ENCODE measurements at regions of chr11 and their contacts with region 1.

Region 1: GRCh38 chr11:45110562-45110961 is 35.9 kb upstream of the PRDM11 start:
- DNase-seq: peak; percentile 75
- H3K4me3 ChIP-seq: no peak overlapping the region
- H3K27ac ChIP-seq: no peak overlapping the region
- H3K4me1 ChIP-seq: 0 out of 2 replicates have a peak, but pooled peaks cover 4% of the 10 kb centered on the region
- H3K27me3 ChIP-seq: peaks cover 35% of the 10 kb centered on the region

Region 2: GRCh38 chr11:45298718-45299117 is 188.2 kb after region 1 on chr11:
- in situ Hi-C with region 1: loop called (anchors 10 kb)
- DNase-seq: no peak
- H3K4me3 ChIP-seq: no peak overlapping the region
- H3K27ac ChIP-seq: no peak overlapping the region
- H3K4me1 ChIP-seq: no peaks in the 10 kb centered on the region
- H3K27me3 ChIP-seq: peaks cover 32% of the 10 kb centered on the region; the same call in 1 of the 2 replicates

Region 3: DNA sequence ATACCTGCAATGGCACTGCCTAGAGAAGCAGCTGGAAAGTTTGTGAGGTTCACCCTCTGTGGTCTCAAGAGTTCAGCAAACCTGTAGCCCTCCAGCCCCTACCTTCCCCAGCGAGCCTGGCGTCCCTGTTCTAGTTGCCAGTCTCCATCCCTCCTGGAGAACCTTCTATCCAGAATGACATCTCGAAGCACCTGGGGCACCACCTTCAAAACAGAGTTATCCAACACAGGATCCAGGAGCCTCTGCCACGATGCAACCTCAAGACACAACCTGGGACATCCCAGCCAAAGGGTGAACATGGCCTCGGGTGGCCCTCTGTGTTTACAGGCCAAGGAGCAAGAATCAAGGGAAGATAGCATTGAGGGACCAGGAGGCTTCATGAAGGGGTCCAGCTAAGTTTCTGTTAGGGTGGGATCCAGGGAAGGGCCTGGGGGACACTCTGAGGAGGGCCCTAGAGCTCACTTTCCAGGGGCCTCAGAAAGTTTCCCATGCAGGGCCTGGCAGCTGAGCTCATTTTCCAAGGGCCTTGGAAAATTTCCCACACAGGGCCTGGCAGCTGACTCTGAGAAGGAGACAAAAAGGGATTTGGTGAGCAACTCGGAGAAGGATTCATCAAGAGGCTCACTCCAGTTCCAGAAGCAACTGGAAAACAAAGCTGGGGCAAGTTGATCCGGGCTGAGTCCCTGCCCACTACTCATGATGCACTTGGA is 212.5 kb after region 1 on chr11:
- in situ Hi-C with region 1: loop called (anchors 10 kb)
- DNase-seq: no peak
- H3K4me3 ChIP-seq: no peak overlapping the region
- H3K27ac ChIP-seq: no peak overlapping the region
- H3K4me1 ChIP-seq: no peaks in the 10 kb centered on the region
- H3K27me3 ChIP-seq: peaks cover 62% of the 10 kb centered on the region